ENCODE measurements at regions of chr20 and their contacts with region 1.

Region 1: DNA sequence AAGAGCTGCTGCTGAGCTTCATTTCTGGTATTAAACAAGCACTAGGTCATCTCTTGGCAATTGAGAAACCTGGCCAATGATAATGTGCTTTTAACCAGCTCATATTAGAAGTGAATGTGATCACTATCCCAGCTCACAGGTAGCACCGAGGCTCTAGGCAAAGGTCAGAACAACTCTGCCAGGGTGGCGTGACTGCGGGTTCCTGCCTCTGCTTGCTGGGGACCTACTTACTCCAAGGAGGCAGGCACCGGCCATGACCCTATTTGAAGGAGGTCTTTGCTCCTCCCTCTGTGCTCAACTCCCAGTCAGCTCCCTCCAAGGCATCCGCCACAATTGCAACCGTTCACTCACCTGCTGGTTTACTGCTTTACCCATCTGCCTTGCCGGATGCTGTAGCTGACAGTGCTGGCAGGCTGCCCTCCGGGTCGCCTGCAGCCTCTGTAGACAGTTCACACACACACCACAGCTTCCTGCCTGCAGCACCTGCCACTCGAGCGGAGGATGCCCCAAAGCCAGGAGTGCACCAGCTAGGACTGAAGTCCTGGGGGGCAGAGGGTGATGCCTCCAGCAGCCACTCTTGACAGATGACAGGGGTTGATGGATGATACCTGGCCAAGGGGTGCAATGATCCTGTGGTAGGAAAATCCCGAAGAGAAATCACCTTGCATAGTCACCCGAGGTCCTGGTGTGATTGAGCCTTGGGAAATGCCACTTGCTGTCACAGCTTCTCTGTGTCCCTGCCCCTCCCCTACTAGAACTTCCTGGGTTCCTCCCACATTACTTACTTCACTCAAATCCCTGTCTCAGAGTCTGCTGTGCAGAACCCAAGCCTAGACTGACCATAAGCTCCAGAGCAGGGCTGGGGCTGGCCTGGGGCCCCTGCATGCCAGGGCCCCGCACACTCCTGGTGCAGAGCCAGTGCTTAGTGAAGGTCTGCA is 8.8 kb upstream of the VSX1 start:
- DNase-seq: peak in 13 of 14 experiments; percentile 40 to 92 (median 78)
- ATAC-seq: peak; percentile 98
- H3K4me3 ChIP-seq: peak overlapping the region; percentile 19
- H3K4me3 Mint-ChIP-seq: peak overlapping the region; percentile 55
- H3K27ac ChIP-seq: peak overlapping the region; percentile 25 to 42
- H3K27ac Mint-ChIP-seq: peak overlapping the region; percentile 76
- H3K4me1 ChIP-seq: peaks cover 30% of the 10 kb centered on the region
- H3K4me1 Mint-ChIP-seq: peaks cover 38% of the 10 kb centered on the region
- H3K27me3 ChIP-seq: peaks cover 0 to 4% of the 10 kb centered on the region in 2 experiments
- H3K27me3 Mint-ChIP-seq: peaks cover 9% of the 10 kb centered on the region
- CTCF ChIP-seq: no peak

Region 2: GRCh38 chr20:25148181-25148981 is 57.6 kb after region 1 on chr20:
- CTCF ChIA-PET with region 1: no interaction called
- POLR2A ChIA-PET with region 1: interaction called, 14 read pairs
- intact Hi-C with region 1: loop called in 1 of 2 experiments (anchors 2 kb)
- DNase-seq: peak; percentile 29 to 82 (median 60)
- ATAC-seq: peak; percentile 95
- H3K4me3 ChIP-seq: peak overlapping the region; percentile 58
- H3K4me3 Mint-ChIP-seq: peak overlapping the region; percentile 94
- H3K27ac ChIP-seq: no peak overlapping the region
- H3K27ac Mint-ChIP-seq: peak overlapping the region; percentile 89
- H3K4me1 ChIP-seq: peaks cover 12% of the 10 kb centered on the region
- H3K4me1 Mint-ChIP-seq: peaks cover 7% of the 10 kb centered on the region
- H3K27me3 ChIP-seq: peaks cover 5 to 9% of the 10 kb centered on the region in 2 experiments
- H3K27me3 Mint-ChIP-seq: peaks cover 5% of the 10 kb centered on the region
- CTCF ChIP-seq: no peak

Region 3: DNA sequence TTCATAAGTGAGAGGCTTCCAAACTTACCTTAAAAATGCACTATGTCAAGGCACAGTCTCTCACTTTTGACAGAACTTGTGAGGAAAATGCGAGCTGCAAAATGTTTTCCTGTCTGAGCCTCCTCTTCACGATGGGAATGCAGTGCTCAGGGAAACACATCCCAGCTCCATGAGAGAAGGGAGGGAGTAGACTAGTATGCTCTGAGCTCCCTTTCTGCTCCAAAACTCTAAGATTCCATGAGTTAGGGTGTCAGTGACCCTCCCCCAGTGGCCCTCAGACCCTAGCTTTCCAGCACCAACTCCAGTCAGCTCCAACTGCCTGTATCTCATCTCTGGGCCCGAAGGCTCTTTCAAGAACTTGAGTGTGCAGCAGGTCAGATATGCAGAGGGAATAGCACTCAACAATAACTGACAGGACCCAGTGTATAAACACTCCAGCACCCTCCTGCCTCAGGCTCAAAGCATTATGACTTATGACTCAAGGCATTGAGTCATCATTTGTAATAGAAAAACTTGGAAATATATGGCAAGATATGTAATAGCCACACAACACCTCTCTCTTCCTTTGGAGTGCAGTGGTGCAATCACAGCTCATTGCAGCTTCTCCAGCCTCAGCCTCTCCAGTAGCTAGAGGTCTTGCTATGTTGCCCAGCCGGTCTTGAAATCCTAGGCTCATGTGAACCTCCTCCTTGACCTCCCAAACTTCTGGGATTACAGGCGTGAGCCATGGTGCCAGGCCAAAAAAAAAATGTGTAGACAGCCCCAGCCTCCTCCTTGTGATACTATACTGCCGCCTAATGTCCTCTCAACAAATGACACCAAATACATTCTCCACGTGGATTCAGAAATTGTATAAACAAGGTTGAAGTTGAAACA is 88.0 kb after region 1 on chr20:
- CTCF ChIA-PET with region 1: no interaction called
- POLR2A ChIA-PET with region 1: no interaction called
- intact Hi-C with region 1: loop called in 1 of 2 experiments (anchors 5 kb)
- DNase-seq: peak in 4 of 14 experiments; percentile 24 to 64 (median 61)
- ATAC-seq: peak; percentile 76
- H3K4me3 ChIP-seq: no peak overlapping the region
- H3K4me3 Mint-ChIP-seq: no peak overlapping the region
- H3K27ac ChIP-seq: no peak overlapping the region
- H3K27ac Mint-ChIP-seq: no peak overlapping the region
- H3K4me1 ChIP-seq: no peaks in the 10 kb centered on the region
- H3K4me1 Mint-ChIP-seq: no peaks in the 10 kb centered on the region
- H3K27me3 ChIP-seq: no peaks in the 10 kb centered on the region
- H3K27me3 Mint-ChIP-seq: peaks cover 18% of the 10 kb centered on the region
- CTCF ChIP-seq: peak; percentile 75

Measured in CD4-positive, alpha-beta T cell (primary cell).